Dendritic cell treated with granulocyte-macrophage colony-stimulating factor and Interleukin-4, amounts not matched to agents 40 ng/mL and 50 ng/mL, for 4 days (primary cell): ENCODE measurements at regions of chr19 and their contacts with region 1.

Region 1: DNA sequence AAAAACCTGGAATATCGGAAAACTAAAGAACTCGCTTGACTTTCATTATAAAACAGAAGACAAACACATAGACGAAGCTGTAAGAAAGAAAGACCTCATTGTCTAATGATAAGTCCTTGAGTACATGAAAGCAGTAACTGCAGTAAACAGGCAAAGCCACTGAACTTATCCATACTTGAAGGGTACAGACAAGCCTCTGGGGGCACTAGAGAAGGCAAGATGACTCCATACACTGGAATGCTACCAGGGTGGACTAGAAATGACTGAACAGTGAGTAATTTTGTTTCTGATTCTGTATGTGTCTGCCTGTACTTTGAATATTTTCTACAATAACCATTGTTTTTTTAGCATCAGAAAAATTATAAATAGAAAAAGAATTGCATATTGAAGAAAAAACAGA is 507.9 kb downstream of the UQCRFS1 start:
- H3K4me3 Mint-ChIP-seq: no peak overlapping the region
- H3K27ac Mint-ChIP-seq: no peak overlapping the region
- H3K4me1 Mint-ChIP-seq: no peaks in the 10 kb centered on the region
- H3K27me3 Mint-ChIP-seq: peaks cover 1% of the 10 kb centered on the region

Region 2: GRCh38 chr19:28324275-28325060 is 380.5 kb before region 1 on chr19:
- intact Hi-C with region 1: loop called (anchors 10 kb)
- H3K4me3 Mint-ChIP-seq: no peak overlapping the region
- H3K27ac Mint-ChIP-seq: no peak overlapping the region
- H3K4me1 Mint-ChIP-seq: peaks cover 5% of the 10 kb centered on the region
- H3K27me3 Mint-ChIP-seq: no peaks in the 10 kb centered on the region